ENCODE measurements at regions of chr14 and their contacts with region 1.

Region 1: GRCh38 chr14:34875031-34875922 is at the start of gene BAZ1A:
- DNase-seq: peak; percentile 82
- H3K4me3 ChIP-seq: peak within 1 kb of the TSS; percentile 99
- H3K27ac ChIP-seq: peak within 1 kb of the TSS; percentile 95
- H3K4me1 ChIP-seq: peaks cover 22% of the 10 kb centered on the region
- CTCF ChIP-seq: no peak
- total RNA-seq, gene BAZ1A: 39.6 and 42.2 TPM in 2 replicates

Region 2: DNA sequence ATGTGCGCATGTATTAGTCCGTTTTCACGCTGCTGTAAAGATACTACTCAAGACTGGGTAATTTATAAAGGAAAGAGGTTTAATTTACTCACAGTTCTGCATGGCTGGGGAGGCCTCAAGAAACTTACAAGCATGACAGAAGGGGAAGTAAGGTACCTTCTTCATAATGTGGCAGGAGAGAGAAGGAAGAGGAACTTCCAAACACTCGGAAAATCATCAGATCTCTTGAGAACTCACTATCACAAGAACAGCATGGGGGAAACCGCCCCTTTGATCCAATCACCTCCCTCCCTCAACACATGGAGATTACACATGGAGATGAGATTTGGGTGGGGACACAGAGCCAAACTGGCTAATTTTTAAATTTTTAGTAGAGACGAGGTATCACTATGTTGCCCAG is 203.6 kb before region 1 on chr14:
- CTCF ChIA-PET with region 1: no interaction called
- POLR2A ChIA-PET with region 1: no interaction called
- intact Hi-C with region 1: loop called (anchors 5 kb)
- DNase-seq: peak; percentile 19
- H3K4me3 ChIP-seq: no peak overlapping the region
- H3K27ac ChIP-seq: peak overlapping the region; percentile 8
- H3K4me1 ChIP-seq: peaks cover 24% of the 10 kb centered on the region
- CTCF ChIP-seq: no peak

Region 3: GRCh38 chr14:34714320-34715126 is 160.8 kb before region 1 on chr14 and contains the start of gene CFL2:
- CTCF ChIA-PET with region 1: no interaction called
- POLR2A ChIA-PET with region 1: interaction called, 3 read pairs
- intact Hi-C with region 1: loop called (anchors 5 kb)
- DNase-seq: peak; percentile 79
- H3K4me3 ChIP-seq: peak within 1 kb of the TSS; percentile 92
- H3K27ac ChIP-seq: peak within 1 kb of the TSS; percentile 87
- H3K4me1 ChIP-seq: peaks cover 48% of the 10 kb centered on the region
- CTCF ChIP-seq: no peak
- total RNA-seq, gene CFL2: 7.1 and 19.6 TPM in 2 replicates

Region 4: GRCh38 chr14:35046048-35046741 is 170.9 kb after region 1 on chr14 and contains the start of gene FAM177A1:
- CTCF ChIA-PET with region 1: no interaction called
- POLR2A ChIA-PET with region 1: interaction called, 3 read pairs
- intact Hi-C with region 1: loop called (anchors 2 kb)
- DNase-seq: peak; percentile 97
- H3K4me3 ChIP-seq: peak within 1 kb of the TSS; percentile 89
- H3K27ac ChIP-seq: peak within 1 kb of the TSS; percentile 57
- H3K4me1 ChIP-seq: peaks cover 18% of the 10 kb centered on the region
- CTCF ChIP-seq: no peak
- total RNA-seq, gene FAM177A1: 17.3 and 19.0 TPM in 2 replicates

Region 5: DNA sequence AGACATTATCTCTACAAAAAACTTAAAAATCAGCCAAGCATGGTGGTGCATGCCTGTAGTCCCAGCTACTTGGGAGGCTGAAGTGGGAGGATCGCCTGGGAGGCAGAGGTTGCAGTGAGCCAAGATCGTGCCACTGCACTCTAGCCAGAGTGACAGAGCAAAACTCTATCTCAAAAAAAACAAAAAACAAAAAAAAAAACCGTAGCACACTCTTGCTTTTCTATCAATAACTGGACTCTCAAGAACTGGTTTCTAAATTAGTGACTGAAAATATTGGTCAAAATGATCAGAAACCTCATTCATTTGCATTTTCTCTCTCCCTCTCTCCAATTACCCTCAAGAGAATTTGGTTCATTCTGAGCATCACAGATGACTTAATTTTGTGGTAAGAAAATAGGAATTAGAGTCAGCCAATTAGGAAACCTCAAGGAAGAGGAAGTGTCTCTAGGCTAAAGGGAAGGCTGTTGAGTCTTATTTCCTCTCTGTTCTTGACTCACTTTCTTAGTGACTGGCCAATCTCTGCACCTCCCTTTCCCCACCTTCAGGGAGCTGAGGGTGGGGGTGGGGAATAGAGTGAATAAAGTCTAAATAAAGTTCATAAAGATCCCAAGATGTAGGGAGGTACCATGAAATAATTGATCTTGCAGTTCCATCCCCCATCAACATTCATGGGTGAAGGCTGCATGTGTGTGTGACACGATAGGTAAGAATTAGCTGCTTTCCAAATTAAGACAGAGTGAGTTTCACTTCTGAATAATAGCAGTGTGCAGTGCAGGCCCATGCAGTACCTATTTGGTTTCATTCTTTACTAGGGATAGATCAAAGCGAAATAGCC is 410.1 kb after region 1 on chr14:
- CTCF ChIA-PET with region 1: no interaction called
- POLR2A ChIA-PET with region 1: no interaction called
- intact Hi-C with region 1: loop called (anchors 10 kb)
- DNase-seq: peak; percentile 81
- H3K4me3 ChIP-seq: peak overlapping the region; percentile 59
- H3K27ac ChIP-seq: peak overlapping the region; percentile 99
- H3K4me1 ChIP-seq: peaks cover 81% of the 10 kb centered on the region
- CTCF ChIP-seq: no peak

Measured in OCI-LY7 (cell line).